Left ventricle myocardium inferior (tissue), 1 donor: ENCODE measurements at regions of chr19 and their contacts with region 1.

Region 1: GRCh38 chr19:39328046-39328705 is 7.5 kb upstream of the LRFN1 start:
- DNase-seq: peak; percentile 82
- H3K4me3 ChIP-seq: no peak overlapping the region
- H3K27ac ChIP-seq: no peak overlapping the region
- H3K4me1 ChIP-seq: peaks cover 4% of the 10 kb centered on the region
- H3K27me3 ChIP-seq: peaks cover 5% of the 10 kb centered on the region
- CTCF ChIP-seq: peak; percentile 95

Region 2: GRCh38 chr19:39106194-39106593 is 222.0 kb before region 1 on chr19:
- intact Hi-C with region 1: loop called (anchors 5 kb)
- DNase-seq: no peak
- H3K4me3 ChIP-seq: no peak overlapping the region
- H3K27ac ChIP-seq: no peak overlapping the region
- H3K4me1 ChIP-seq: no peaks in the 10 kb centered on the region
- H3K27me3 ChIP-seq: peaks cover 85% of the 10 kb centered on the region
- CTCF ChIP-seq: no peak

Region 3: DNA sequence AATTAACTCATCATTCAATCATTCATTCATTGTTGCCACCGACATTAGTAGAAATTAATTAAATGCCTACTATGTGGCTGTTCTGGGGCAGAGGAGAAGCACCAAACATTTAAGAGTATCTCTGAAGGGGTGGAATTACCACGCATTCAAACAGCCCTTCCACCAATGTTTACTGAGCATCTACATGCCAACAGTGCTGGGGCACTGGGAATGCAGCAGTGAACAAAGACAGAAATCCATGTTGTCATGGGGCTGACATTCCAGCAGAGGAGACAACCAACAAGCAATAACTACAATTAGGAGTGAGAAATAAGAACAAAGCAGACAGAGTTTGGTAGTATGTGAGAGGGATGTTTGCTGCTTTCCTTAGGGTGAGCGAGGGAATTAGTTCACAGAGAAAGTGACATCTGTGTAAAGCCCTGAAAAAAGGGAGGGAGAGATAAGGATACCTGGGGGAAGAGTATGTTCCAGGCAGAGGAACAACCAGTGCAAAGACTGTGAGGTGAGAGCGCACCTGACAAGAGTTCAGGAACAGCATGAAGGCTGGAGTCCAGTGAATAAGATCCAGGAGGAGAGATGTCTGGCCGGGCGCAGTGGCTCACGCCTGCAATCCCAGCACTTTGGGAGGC is 203.9 kb before region 1 on chr19:
- intact Hi-C with region 1: loop called (anchors 5 kb)
- DNase-seq: no peak
- H3K4me3 ChIP-seq: no peak overlapping the region
- H3K27ac ChIP-seq: no peak overlapping the region
- H3K4me1 ChIP-seq: peaks cover 53% of the 10 kb centered on the region
- H3K27me3 ChIP-seq: peaks cover 18% of the 10 kb centered on the region
- CTCF ChIP-seq: no peak

Region 4: DNA sequence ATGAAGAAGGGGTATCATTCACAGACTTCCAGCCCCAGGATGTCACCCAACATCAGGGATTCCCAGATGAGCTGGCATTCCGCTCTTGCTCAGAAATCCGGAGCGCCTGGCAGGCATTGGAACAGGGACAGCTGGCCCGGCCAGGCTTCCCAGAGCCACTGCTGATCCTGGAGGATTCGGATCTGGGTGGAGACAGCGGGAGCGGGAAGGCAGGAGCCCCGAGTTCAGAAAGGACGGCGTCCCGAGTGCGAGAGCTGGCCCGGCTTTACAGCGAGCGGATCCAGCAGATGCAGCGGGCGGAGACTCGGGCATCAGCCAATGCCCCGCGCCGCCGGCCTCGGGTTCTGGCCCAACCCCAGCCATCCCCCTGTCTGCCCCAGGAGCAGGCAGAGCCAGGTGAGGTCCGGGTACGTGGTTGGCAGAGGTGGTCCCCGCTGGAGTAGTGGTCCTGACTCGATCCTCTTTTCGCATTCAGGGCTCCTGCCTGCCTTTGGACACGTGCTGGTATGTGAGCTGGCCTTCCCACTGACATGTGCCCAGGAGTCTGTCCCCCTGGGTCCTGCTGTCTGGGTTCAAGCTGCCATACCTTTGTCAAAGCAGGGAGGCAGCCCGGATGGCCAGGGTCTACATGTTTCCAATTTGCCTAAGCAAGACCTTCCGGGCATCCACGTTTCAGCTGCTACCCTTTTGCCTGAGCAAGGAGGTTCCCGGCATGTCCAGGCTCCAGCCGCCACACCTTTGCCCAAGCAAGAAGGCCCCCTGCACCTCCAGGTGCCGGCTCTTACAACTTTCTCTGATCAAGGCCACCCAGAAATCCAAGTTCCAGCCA is 95.3 kb after region 1 on chr19:
- intact Hi-C with region 1: no loop called
- DNase-seq: peak; percentile 12
- H3K4me3 ChIP-seq: no peak overlapping the region
- H3K27ac ChIP-seq: no peak overlapping the region
- H3K4me1 ChIP-seq: peaks cover 9% of the 10 kb centered on the region
- H3K27me3 ChIP-seq: no peaks in the 10 kb centered on the region
- CTCF ChIP-seq: no peak